Activated CD4-positive, alpha-beta memory T cell treated with anti-CD3 and anti-CD28 coated beads for 36 hours (primary cell): ENCODE measurements at regions of chr5 and their contacts with region 1.

Region 1: DNA sequence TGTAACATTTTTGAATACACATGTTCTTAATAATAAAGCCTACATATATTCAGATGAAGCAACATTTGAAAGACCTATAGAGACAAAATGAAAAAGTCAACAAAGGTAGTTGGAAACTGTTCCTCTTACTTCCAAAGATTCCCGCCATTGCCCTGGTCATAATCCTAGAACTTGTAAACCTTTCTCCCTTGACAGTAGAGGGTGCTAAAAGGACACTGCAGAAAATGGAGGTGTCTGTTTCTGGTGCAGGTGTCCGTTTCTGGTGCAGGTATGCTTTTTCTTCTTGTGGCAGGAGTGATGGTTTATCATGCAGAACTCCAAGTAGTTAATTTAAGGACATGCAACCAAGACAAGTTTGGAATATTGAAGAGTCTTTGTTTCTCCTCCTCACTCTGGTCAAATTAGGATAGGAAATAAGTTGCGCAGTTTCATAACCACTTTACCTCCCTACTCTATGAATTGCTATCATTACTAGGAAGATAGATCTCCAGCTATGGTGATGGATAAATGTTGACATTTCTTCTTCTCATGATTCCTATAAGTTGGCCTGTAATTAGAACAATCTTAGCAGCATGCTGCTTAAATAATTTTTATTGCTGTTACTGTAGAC is 56.0 kb upstream of the FAM174A start:
- DNase-seq: no peak
- H3K4me3 Mint-ChIP-seq: no peak overlapping the region
- H3K27ac Mint-ChIP-seq: no peak overlapping the region
- H3K4me1 Mint-ChIP-seq: no peaks in the 10 kb centered on the region
- H3K27me3 Mint-ChIP-seq: no peaks in the 10 kb centered on the region

Region 2: GRCh38 chr5:100706776-100707175 is 227.6 kb after region 1 on chr5:
- CTCF ChIA-PET with region 1: no interaction called
- POLR2A ChIA-PET with region 1: no interaction called
- intact Hi-C with region 1: no loop called
- DNase-seq: no peak
- H3K4me3 Mint-ChIP-seq: no peak overlapping the region
- H3K27ac Mint-ChIP-seq: no peak overlapping the region
- H3K4me1 Mint-ChIP-seq: no peaks in the 10 kb centered on the region
- H3K27me3 Mint-ChIP-seq: no peaks in the 10 kb centered on the region

Region 3: GRCh38 chr5:101045689-101046088 is 566.5 kb after region 1 on chr5:
- CTCF ChIA-PET with region 1: no interaction called
- POLR2A ChIA-PET with region 1: no interaction called
- intact Hi-C with region 1: loop called (anchors 1 kb)
- DNase-seq: no peak
- H3K4me3 Mint-ChIP-seq: no peak overlapping the region
- H3K27ac Mint-ChIP-seq: no peak overlapping the region
- H3K4me1 Mint-ChIP-seq: peaks cover 2% of the 10 kb centered on the region
- H3K27me3 Mint-ChIP-seq: no peaks in the 10 kb centered on the region

Region 4: DNA sequence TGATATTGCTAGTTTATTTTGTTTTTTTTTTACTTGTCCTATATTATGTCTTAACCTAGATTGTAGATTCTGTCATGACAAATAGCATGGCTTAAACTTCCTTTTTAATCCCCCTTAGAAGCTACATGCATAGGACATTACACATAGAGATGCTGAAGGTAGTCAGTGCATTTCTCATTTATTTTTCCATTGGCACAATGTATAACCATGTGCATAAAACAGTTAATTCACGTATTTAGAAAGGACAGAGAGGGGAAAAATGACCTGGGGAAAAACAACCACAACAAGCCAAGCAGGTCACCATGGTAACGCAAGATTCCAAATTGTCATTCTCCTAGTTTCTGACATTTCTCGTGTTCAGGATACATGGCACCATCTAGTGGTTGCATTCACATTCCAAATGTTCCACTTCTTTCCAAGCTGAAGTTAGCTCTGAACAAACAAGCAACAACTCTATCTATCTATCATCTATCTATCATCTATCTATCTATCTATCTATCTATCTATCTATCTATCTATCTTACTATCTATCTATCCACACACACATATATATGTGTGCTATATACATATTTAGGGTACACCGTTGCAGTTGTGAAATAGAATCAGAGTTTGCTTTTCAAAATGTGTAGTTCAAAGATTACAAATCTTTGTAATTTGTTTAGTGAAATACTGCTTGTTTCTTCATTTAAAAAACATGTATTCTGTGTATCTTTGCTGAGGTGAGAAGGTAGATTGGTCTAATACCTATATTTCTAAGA is 911.1 kb after region 1 on chr5:
- CTCF ChIA-PET with region 1: interaction called, 3 read pairs
- POLR2A ChIA-PET with region 1: no interaction called
- intact Hi-C with region 1: loop called (anchors 2 kb)
- DNase-seq: no peak
- H3K4me3 Mint-ChIP-seq: no peak overlapping the region
- H3K27ac Mint-ChIP-seq: no peak overlapping the region
- H3K4me1 Mint-ChIP-seq: no peaks in the 10 kb centered on the region
- H3K27me3 Mint-ChIP-seq: no peaks in the 10 kb centered on the region